Activated CD4-positive, alpha-beta T cell treated with anti-CD3 and anti-CD28 coated beads, Interleukin-2, amount 10 ng/mL, durations not matched to agents 24 days and 14 days (primary cell): ENCODE measurements at regions of chr1 and their contacts with region 1.

Region 1: DNA sequence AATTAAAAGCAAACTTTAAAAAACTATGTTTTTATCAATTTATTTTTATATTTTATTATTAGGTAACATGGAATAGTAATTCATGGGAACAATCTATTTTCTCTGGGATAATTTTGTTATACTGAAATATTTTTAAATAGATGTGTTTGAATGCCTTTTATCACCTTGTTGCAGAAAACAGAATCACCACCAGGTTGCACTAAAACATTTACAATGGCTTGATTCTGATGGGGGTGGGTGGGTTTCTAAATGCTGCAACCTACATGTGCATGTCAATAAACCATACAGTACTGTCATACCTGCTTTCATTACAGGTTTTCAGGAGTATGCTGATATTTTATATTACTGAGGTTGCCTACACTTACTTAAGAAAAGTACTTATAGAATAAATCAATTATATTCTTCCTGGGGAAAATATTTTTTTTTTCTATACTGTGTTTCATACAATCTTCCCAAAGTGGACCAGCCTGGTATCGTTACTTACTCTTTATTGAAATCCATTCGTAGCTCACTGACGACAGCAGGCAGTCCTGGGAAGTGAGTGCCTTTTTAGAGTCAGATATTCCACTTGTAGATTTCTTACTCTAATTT is 132.8 kb downstream of the PTPRC start:
- DNase-seq: peak; percentile 69
- H3K4me3 Mint-ChIP-seq: no peak overlapping the region
- H3K27ac Mint-ChIP-seq: no peak overlapping the region
- H3K4me1 Mint-ChIP-seq: peaks cover 14% of the 10 kb centered on the region
- H3K27me3 Mint-ChIP-seq: peaks cover 2% of the 10 kb centered on the region

Region 2: GRCh38 chr1:198298640-198299039 is 473.0 kb before region 1 on chr1:
- intact Hi-C with region 1: no loop called
- DNase-seq: no peak
- H3K4me3 Mint-ChIP-seq: no peak overlapping the region
- H3K27ac Mint-ChIP-seq: no peak overlapping the region
- H3K4me1 Mint-ChIP-seq: no peaks in the 10 kb centered on the region
- H3K27me3 Mint-ChIP-seq: no peaks in the 10 kb centered on the region

Region 3: DNA sequence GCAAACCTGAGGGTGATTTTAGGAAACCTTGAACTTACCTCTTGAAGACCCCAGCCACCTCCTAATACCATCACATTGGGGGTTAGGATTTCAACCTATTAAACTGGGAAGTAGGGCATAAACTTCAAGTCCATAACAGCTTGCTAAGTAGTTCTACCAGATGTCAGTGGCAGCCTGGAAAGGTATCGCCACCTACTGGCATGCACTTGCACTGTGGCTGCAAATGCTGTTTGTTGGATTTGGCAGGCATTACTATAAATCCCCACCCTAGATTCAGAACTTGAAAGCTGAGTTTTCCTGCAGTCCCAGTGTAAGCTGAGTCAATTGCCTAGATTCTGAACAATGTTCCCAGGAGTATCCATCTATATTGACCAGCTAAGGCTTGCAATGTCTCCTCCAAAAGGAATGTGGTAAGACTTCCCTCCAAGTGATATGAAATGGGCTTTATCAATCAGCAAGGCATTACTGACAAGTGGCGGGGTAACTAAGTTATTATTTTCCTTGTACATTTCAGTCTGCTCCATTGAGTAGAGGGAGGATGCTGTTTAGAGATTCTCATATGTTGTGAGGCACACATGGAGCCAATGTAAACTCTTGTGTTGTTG is 341.7 kb after region 1 on chr1:
- intact Hi-C with region 1: loop called (anchors 2 kb)
- DNase-seq: peak; percentile 89
- H3K4me3 Mint-ChIP-seq: no peak overlapping the region
- H3K27ac Mint-ChIP-seq: no peak overlapping the region
- H3K4me1 Mint-ChIP-seq: peaks cover 11% of the 10 kb centered on the region
- H3K27me3 Mint-ChIP-seq: no peaks in the 10 kb centered on the region

Region 4: GRCh38 chr1:199243423-199244061 is 471.9 kb after region 1 on chr1:
- intact Hi-C with region 1: loop called (anchors 1 kb)
- DNase-seq: peak; percentile 93
- H3K4me3 Mint-ChIP-seq: no peak overlapping the region
- H3K27ac Mint-ChIP-seq: no peak overlapping the region
- H3K4me1 Mint-ChIP-seq: peaks cover 19% of the 10 kb centered on the region
- H3K27me3 Mint-ChIP-seq: peaks cover 24% of the 10 kb centered on the region

Region 5: DNA sequence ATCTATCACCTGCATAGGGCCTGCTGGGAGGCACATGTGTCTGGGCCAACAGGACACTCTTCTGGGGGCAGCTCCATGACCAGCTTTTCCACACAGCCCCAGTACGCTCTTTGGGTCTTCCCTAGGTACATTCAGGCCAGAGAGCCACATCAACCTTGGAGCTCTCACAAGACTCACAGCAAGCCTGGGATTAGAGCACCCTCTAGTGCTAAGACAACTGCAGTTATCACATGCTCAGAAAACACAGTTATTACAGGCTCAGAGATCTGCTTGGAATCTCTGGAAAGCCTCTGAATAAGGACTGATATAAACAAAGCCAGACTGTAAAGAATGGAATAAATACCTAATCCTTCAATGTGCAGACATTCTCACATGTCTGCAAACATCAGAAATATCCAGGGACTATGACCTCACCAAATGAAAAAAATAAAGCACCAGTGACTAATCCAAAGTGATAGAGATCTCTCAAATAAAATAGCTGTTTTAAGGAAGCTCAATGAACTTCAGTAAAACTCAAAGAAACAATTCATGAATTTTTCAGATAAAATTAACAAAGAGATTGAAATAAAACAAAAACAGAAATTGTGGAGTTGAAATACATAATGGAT is 692.0 kb after region 1 on chr1:
- intact Hi-C with region 1: loop called (anchors 10 kb)
- DNase-seq: peak; percentile 74
- H3K4me3 Mint-ChIP-seq: no peak overlapping the region
- H3K27ac Mint-ChIP-seq: no peak overlapping the region
- H3K4me1 Mint-ChIP-seq: no peaks in the 10 kb centered on the region
- H3K27me3 Mint-ChIP-seq: peaks cover 4% of the 10 kb centered on the region

Region 6: DNA sequence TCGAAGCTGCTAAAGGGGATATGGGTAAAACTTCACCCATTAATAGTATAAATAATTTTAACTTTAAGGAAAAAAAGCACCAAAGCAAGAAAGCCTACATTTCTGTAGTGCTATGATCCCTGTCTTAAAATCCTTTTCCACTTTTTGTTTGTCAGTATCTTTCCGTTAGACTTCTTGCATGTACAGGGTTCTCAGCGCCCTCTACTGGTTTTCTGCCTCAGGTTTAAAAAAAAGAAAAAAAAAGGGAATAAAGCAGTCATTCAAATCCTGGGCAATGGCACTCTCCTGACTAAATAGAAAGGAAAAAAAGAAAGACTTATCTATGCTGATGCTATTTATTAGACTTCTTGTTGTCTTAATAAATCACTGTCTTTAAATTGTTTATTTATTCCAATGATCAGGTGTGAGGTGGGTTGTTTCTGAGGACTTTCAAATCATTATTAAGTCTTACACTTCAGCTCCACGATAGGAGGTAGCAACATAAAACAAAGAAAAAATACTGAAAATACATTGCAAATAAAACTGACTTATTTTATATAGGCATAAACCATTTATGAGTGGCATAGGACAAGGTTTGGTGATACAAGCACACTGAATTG is 780.4 kb after region 1 on chr1:
- intact Hi-C with region 1: loop called (anchors 2 kb)
- DNase-seq: peak; percentile 82
- H3K4me3 Mint-ChIP-seq: no peak overlapping the region
- H3K27ac Mint-ChIP-seq: no peak overlapping the region
- H3K4me1 Mint-ChIP-seq: no peaks in the 10 kb centered on the region
- H3K27me3 Mint-ChIP-seq: peaks cover 3% of the 10 kb centered on the region